Psoas muscle (tissue), 8 donors: ENCODE measurements at regions of chr14 and their contacts with region 1.

Region 1: GRCh38 chr14:71994416-71994815 is 62.2 kb downstream of the RGS6 start:
- DNase-seq: no peak
- ATAC-seq: no peak
- H3K4me3 ChIP-seq: no peak overlapping the region
- H3K27ac ChIP-seq: no peak overlapping the region
- H3K4me1 ChIP-seq: no peaks in the 10 kb centered on the region
- H3K27me3 ChIP-seq: no peaks in the 10 kb centered on the region
- CTCF ChIP-seq: no peak

Region 2: DNA sequence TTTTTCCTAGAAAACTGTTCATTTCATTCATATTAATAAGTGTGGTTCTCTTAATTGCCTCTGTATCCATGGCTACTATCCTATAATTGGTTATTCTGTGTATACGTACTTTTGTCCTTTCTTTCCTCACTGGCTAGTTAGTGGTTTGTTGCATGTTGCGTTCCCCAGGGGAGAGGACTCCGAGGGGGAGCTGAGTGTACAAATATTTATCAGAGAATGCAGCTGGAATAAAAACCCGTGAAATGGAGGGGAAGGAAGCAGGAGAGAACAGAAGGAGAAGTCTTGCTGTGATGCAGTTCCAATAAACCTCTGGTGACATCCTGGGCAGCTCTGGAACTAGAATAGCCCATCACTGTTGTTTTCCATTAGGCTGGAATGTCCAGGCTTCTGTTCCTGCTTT is 179.3 kb before region 1 on chr14:
- intact Hi-C with region 1: no loop called
- DNase-seq: no peak
- ATAC-seq: no peak
- H3K4me3 ChIP-seq: no peak overlapping the region
- H3K27ac ChIP-seq: no peak overlapping the region
- H3K4me1 ChIP-seq: no peaks in the 10 kb centered on the region
- H3K27me3 ChIP-seq: no peaks in the 10 kb centered on the region
- CTCF ChIP-seq: no peak

Region 3: GRCh38 chr14:72026536-72026935 is 32.1 kb after region 1 on chr14:
- intact Hi-C with region 1: loop called in 1 of 2 experiments (anchors 1 kb)
- DNase-seq: no peak
- ATAC-seq: no peak
- H3K4me3 ChIP-seq: no peak overlapping the region
- H3K27ac ChIP-seq: no peak overlapping the region
- H3K4me1 ChIP-seq: no peaks in the 10 kb centered on the region
- H3K27me3 ChIP-seq: no peaks in the 10 kb centered on the region
- CTCF ChIP-seq: no peak

Region 4: DNA sequence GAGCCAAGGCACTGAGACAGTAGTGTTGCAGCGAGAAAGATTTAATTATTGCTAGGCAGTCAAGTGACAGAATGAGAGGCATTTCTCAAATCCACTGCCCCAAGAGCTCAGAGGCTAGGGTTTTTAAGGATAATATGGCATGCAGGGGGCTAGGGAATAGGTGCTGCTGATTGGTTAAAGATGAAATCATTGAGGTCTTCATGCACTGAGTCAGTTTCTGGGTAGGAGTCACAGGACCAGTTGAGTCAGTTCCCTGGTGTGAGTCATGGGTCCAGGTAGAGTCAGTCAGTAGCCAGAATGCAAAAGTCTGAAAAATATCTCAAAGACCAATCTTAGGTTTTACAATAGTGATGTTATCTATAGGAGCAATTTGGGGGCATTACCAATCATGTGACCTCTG is 261.6 kb after region 1 on chr14:
- intact Hi-C with region 1: no loop called
- DNase-seq: no peak
- ATAC-seq: no peak
- H3K4me3 ChIP-seq: no peak overlapping the region
- H3K27ac ChIP-seq: no peak overlapping the region
- H3K4me1 ChIP-seq: no peaks in the 10 kb centered on the region
- H3K27me3 ChIP-seq: no peaks in the 10 kb centered on the region
- CTCF ChIP-seq: no peak